ENCODE measurements at regions of chr5 and their contacts with region 1.

Region 1: GRCh38 chr5:42994246-42995151 is 45.6 kb downstream of the ANXA2R start:
- DNase-seq: peak; percentile 70
- H3K4me3 Mint-ChIP-seq: peak overlapping the region; percentile 95
- H3K27ac Mint-ChIP-seq: peak overlapping the region; percentile 99
- H3K4me1 Mint-ChIP-seq: peaks cover 31% of the 10 kb centered on the region
- H3K27me3 Mint-ChIP-seq: no peaks in the 10 kb centered on the region
- CTCF ChIP-seq: peak; percentile 30

Region 2: DNA sequence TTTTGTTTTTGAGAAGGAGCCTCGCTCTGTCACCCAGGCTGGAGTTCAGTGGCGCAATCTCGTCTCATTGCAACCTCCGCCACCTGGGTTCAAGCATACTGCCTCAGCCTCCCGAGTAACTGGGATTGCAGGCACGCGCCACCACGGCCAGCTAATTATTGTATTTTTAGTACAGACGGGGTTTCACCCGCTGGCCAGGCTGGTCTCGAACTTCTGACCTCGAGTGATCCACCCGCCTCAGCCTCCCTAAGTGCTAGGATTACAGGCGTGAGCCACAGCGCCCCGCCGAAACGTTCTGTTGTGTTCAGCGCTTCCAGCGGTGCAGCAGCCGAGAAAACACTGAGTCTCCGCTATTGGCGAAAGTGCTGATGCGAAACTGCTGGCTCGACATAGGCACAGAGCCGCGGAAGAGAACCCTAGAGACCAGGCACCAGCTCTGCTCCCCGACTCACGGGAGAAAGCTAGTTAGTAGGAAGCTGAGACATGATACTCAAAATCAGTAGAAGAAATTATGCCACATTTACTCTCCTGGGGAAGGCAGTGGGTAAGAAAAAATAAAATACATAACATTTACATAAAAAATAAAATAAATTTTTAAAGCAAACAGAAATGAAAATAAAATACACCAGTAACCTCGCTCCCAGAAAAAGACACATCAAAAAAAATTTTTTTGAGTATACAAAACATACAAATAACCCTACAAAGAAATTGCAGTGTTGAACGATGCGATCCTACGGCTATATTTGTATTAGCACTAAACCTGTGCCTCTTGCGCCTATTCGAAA is 14.1 kb after region 1 on chr5:
- CTCF ChIA-PET with region 1: interaction called, 5 read pairs
- intact Hi-C with region 1: loop called (anchors 1 kb)
- DNase-seq: peak; percentile 92
- H3K4me3 Mint-ChIP-seq: peak overlapping the region; percentile 73
- H3K27ac Mint-ChIP-seq: peak overlapping the region; percentile 37
- H3K4me1 Mint-ChIP-seq: peaks cover 21% of the 10 kb centered on the region
- H3K27me3 Mint-ChIP-seq: no peaks in the 10 kb centered on the region
- CTCF ChIP-seq: no peak

Region 3: DNA sequence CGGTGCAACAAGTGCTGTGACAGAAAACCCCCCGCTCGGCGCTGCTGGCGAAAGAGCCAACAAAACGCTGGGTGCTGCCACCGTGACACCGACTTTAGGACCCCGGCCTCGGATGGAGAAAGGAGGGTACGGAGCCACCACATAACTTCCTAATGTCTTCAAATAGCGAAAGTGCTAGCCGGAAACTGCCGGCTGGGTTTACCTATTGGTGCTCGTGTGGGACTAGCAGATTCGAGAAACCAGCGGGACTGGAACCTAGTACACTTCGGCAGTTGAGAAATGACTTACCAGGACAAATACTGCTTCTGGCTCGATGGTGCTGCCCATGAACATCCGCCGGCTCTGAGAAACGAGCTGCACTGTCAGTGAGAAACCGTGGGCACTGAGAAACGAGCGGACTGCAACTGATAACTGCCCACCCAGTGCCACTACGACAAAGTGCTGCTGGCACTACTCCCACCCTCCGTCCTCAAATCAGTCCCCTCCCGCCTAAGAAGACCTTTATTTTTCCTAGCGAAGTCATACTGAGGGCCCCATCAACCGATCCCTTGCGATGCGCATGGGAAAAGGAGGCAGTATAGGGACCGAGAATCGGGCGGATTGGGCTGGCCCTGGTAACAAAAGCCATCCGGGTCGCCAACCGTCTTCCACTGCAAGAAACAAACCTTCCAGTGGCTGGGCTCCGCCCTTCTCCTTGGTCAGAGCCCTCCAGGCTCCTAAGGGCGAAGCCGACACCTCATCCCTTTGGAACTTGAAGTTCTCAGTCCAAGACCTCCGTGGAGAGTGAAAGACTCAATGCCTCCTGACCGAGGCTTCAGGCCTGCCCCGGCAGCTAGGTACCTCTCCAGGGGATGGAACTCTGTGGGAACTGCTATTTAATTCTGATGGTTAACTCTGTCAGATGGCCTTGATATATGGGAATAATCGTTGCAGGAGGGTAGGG is 72.6 kb after region 1 on chr5:
- CTCF ChIA-PET with region 1: interaction called, 6 read pairs
- intact Hi-C with region 1: loop called (anchors 2 kb)
- DNase-seq: peak; percentile 86
- H3K4me3 Mint-ChIP-seq: peak overlapping the region; percentile 84
- H3K27ac Mint-ChIP-seq: peak overlapping the region; percentile 88
- H3K4me1 Mint-ChIP-seq: peaks cover 41% of the 10 kb centered on the region
- H3K27me3 Mint-ChIP-seq: no peaks in the 10 kb centered on the region
- CTCF ChIP-seq: no peak

Region 4: DNA sequence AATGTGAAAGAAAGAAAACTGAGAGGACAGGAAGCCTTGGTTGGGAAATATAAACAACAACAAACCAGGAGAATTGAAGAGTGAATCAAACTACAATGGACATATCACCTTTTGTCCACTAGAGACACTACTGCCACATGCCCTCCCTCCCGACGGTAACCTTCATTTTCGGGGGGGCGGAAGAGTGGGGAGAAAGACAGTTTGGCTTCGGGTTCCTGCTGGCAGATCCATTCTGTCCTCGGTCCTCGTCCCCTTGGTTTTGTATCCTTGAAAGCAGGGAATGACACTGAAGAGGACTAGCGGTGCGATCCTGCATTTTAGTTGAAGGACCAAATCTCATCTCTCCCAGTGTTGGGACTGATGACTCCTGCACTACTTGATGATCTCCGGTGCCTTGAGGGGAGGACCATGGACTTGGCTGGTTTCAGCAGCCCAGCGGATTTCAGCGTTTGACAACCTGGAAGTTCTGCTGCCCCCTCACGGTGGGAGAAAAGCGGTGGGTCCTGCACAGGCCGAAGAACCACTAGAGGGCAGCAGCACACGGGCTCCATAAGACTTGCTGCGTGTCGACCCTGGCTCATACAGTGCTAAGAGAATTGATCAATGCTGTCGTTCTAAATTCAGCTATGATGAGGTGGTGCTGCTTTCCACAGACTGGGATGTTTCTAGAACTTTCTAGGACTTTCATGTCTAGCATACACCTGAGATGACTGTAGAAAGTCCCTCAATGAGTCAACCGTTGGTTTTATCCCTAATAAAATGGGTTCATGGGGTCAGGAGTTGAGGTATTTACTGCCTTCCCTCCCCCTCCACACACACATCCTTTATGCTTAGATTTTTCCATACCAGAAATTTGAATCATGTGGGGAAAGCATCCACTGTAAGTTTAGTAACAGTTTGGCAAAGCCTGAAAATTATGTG is 111.1 kb after region 1 on chr5:
- CTCF ChIA-PET with region 1: no interaction called
- intact Hi-C with region 1: loop called (anchors 5 kb)
- DNase-seq: peak; percentile 92
- H3K4me3 Mint-ChIP-seq: peak overlapping the region; percentile 67
- H3K27ac Mint-ChIP-seq: peak overlapping the region; percentile 21
- H3K4me1 Mint-ChIP-seq: no peaks in the 10 kb centered on the region
- H3K27me3 Mint-ChIP-seq: no peaks in the 10 kb centered on the region
- CTCF ChIP-seq: peak; percentile 99

Region 5: DNA sequence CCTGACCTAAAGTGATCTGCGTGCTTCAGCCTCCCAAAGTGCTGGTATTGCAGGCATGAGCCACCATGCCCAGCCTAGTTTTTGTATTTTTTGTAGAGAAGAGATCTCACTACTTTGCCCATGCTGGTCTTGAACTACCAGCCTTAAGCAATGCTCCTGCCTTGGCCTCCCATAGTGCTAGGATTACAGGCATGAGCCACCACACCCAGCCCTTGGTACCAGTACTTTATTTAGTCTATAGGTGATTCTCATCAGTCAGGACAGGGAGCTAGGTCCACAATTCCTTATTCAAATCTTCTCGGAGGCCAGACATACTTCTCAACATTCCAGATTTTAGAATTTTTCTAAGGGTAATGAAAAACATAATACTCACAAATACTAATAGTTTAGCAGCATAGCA is 134.7 kb after region 1 on chr5:
- CTCF ChIA-PET with region 1: no interaction called
- intact Hi-C with region 1: no loop called
- DNase-seq: no peak
- H3K4me3 Mint-ChIP-seq: no peak overlapping the region
- H3K27ac Mint-ChIP-seq: no peak overlapping the region
- H3K4me1 Mint-ChIP-seq: peaks cover 14% of the 10 kb centered on the region
- H3K27me3 Mint-ChIP-seq: no peaks in the 10 kb centered on the region
- CTCF ChIP-seq: no peak

Measured in Calu3 (cell line).